ENCODE measurements at regions of chr4 and their contacts with region 1.

Region 1: GRCh38 chr4:6250235-6250983 is 19.2 kb upstream of the WFS1 start:
- DNase-seq: peak in 1 of 6 donors; percentile 22
- ATAC-seq: peak; percentile 70 to 95 (median 88)
- H3K4me3 ChIP-seq: no peak overlapping the region
- H3K27ac ChIP-seq: no peak overlapping the region
- H3K4me1 ChIP-seq: no peaks in the 10 kb centered on the region
- H3K27me3 ChIP-seq: peaks cover 0 to 30% (median 3%) of the 10 kb centered on the region in 4 donors
- CTCF ChIP-seq: peak; percentile 63 to 80 (median 72)

Region 2: DNA sequence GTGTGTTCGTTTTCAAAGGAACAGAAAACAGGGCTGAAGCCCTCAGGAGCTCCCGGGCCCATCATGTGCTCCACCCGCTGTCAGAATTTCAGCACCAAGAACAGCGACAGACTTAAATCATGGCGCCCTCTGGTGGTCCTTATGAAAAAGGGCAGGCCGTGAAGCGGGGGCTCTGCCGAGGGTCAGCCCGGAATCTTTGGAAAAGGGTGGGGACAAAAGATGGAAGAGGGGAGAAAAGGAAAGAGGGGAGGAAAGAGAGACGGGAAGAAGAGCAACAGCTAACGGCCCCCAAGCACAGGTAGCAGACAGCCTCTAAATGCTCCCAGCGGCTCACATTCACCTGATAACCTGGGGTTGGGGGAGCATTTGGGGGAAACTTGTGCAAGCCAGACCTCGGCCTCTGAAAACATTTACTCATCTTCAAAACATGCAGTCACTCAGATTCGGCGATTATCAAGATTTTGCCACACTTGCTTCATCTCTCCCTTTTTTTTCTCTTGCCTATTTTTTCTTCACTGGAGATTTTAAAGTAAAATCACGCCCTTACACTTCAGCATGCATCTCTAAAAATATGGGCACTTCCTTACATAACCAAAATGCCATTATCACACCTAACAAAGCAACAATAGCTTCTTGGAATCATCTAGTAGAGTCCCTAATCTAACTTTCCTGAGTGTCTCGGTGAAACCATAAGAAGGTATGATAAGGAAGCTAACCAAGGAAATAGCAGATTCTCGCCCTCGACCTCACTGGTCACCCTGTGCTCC is 296.5 kb after region 1 on chr4:
- intact Hi-C with region 1: loop called in 2 of 3 experiments (anchors 10 kb)
- DNase-seq: peak in 3 of 6 donors; percentile 24 to 37 (median 31)
- ATAC-seq: peak in 3 of 4 donors; percentile 80 to 91 (median 83)
- H3K4me3 ChIP-seq: no peak overlapping the region
- H3K27ac ChIP-seq: no peak overlapping the region
- H3K4me1 ChIP-seq: no peaks in the 10 kb centered on the region
- H3K27me3 ChIP-seq: no peaks in the 10 kb centered on the region
- CTCF ChIP-seq: peak; percentile 40 to 83 (median 72)

Measured in pancreas (tissue), 10 donors.